CD4-positive, alpha-beta memory T cell (primary cell): ENCODE measurements at regions of chr1 and their contacts with region 1.

Region 1: DNA sequence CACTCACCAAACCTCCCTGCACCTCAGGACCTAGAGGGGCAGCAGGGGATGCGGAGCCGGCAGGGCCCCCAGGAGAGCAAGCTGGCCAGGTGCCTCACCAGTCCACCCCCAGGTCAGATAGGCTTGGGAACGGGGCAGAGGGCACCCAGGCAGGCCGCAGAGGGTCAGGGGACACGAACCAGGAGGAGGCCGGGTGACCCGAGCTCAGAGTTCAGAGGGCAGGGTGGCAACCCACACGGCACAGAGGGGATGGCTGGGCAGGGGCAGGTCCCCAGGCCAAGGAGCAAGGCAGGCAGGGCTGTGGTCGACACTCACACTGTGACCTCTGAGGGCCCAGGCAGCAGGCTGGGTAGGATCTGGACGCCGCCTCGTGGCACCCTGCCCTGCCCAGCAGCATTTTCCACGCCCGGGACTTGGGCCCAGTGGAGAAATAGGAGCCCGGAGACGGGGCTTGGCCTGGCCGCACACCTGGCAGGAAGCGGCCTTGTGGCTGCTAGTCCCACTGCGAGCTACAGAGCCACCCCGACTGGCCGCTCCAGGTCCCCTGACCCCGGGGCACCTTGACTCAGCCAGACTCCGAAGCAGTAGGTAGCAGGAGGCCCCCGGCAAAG is 5.3 kb downstream of the DVL1 start:
- DNase-seq: no peak
- H3K4me3 ChIP-seq: no peak overlapping the region
- H3K4me3 Mint-ChIP-seq: no peak overlapping the region
- H3K27ac ChIP-seq: no peak overlapping the region
- H3K27ac Mint-ChIP-seq: peak overlapping the region in 1 of 7 donors; percentile 44
- H3K4me1 ChIP-seq: peaks cover 14% of the 10 kb centered on the region
- H3K4me1 Mint-ChIP-seq: peaks cover 4 to 28% (median 16%) of the 10 kb centered on the region in 4 donors
- H3K27me3 ChIP-seq: no peaks in the 10 kb centered on the region
- H3K27me3 Mint-ChIP-seq: no peaks in the 10 kb centered on the region

Region 2: GRCh38 chr1:1324521-1325287 is 19.2 kb before region 1 on chr1 and contains the starts of genes CPTP and INTS11:
- CTCF ChIA-PET with region 1: no interaction called
- POLR2A ChIA-PET with region 1: interaction called, 6 read pairs
- intact Hi-C with region 1: loop called (anchors 1 kb)
- DNase-seq: peak; percentile 95 to 96 (median 96)
- H3K4me3 ChIP-seq: peak within 1 kb of the TSS; percentile 49 to 77
- H3K4me3 Mint-ChIP-seq: peak within 1 kb of the TSS; percentile 87 to 97 (median 93)
- H3K27ac ChIP-seq: peak within 1 kb of the TSS; percentile 89
- H3K27ac Mint-ChIP-seq: peak within 1 kb of the TSS; percentile 77 to 97 (median 91)
- H3K4me1 ChIP-seq: peaks cover 41% of the 10 kb centered on the region
- H3K4me1 Mint-ChIP-seq: peaks cover 9 to 53% (median 34%) of the 10 kb centered on the region in 4 donors
- H3K27me3 ChIP-seq: no peaks in the 10 kb centered on the region
- H3K27me3 Mint-ChIP-seq: no peaks in the 10 kb centered on the region
- total RNA-seq, gene CPTP: 25.0 to 28.3 TPM
- total RNA-seq, gene INTS11: 163 to 173 TPM